Activated naive CD4-positive, alpha-beta T cell treated with anti-CD3 and anti-CD28 coated beads, Interleukin-2, amount 10 ng/mL, durations not matched to agents 7 days and 5 days (primary cell): ENCODE measurements at regions of chr9 and their contacts with region 1.

Region 1: GRCh38 chr9:121686930-121687541 is 35.6 kb downstream of the DAB2IP start:
- DNase-seq: peak; percentile 83
- H3K4me3 Mint-ChIP-seq: no peak overlapping the region
- H3K27ac Mint-ChIP-seq: no peak overlapping the region
- H3K4me1 Mint-ChIP-seq: no peaks in the 10 kb centered on the region
- H3K27me3 Mint-ChIP-seq: peaks cover 42% of the 10 kb centered on the region

Region 2: GRCh38 chr9:121698627-121699570 is 11.9 kb after region 1 on chr9:
- CTCF ChIA-PET with region 1: interaction called, 24 read pairs
- DNase-seq: peak; percentile 80
- H3K4me3 Mint-ChIP-seq: no peak overlapping the region
- H3K27ac Mint-ChIP-seq: no peak overlapping the region
- H3K4me1 Mint-ChIP-seq: peaks cover 20% of the 10 kb centered on the region
- H3K27me3 Mint-ChIP-seq: peaks cover 91% of the 10 kb centered on the region